Posterior vena cava (tissue), 2 donors: ENCODE measurements at regions of chr22 and their contacts with region 1.

Region 1: DNA sequence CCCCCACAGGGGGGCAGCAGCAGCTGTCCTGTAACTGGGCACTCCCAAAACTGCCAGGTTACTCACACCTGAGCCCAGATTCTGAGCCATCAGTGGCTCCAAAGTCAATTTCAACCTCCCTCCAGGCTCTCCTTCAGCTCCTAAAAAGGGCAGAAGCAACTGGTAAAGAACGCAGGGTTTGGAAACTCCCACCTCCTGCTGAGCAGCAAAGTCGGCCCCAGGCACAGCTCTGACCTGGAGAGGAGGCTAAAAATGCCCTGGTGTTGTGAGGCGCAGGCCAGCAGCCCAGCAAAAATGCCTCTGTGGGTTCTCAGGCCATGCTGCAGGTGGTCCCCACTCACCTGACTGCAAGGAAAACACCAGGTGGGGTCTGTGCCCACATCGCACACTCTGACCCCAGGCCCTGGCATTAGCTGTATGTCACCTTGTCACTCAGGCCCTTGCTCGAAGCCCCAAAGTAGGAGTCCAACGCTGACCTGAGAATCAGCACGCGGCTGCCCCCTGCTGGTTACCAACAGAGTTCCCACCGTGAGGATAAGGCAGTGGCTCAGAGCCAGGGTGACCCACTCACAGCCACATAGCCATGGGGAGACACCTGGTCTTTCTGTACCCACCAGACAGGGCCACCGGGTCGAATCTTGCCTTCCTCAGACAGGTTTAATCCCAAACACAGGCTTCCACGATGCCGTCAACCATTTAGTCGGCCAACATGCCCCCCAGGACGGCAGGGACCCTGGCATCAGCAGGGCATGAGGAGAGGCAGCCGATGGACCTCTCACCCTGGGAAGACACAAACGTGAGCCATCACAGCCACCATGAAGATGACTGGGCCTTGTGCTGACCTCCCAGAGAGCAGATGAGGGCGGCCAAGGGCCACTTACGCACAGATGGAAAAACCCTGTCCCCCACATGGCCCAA is 11.1 kb downstream of the POLR3H start:
- DNase-seq: peak; percentile 91

Region 2: GRCh38 chr22:41403532-41404318 is 129.4 kb before region 1 on chr22:
- intact Hi-C with region 1: loop called in 1 of 2 experiments (anchors 5 kb)
- DNase-seq: peak; percentile 97

Region 3: GRCh38 chr22:41582694-41583093 is 49.5 kb after region 1 on chr22:
- intact Hi-C with region 1: loop called in 1 of 2 experiments (anchors 1 kb)
- DNase-seq: no peak

Region 4: GRCh38 chr22:42134100-42135020 is 601.2 kb after region 1 on chr22:
- intact Hi-C with region 1: no loop called
- DNase-seq: peak; percentile 38